Esophagus muscularis mucosa (tissue), 4 donors: ENCODE measurements at regions of chr1 and their contacts with region 1.

Region 1: DNA sequence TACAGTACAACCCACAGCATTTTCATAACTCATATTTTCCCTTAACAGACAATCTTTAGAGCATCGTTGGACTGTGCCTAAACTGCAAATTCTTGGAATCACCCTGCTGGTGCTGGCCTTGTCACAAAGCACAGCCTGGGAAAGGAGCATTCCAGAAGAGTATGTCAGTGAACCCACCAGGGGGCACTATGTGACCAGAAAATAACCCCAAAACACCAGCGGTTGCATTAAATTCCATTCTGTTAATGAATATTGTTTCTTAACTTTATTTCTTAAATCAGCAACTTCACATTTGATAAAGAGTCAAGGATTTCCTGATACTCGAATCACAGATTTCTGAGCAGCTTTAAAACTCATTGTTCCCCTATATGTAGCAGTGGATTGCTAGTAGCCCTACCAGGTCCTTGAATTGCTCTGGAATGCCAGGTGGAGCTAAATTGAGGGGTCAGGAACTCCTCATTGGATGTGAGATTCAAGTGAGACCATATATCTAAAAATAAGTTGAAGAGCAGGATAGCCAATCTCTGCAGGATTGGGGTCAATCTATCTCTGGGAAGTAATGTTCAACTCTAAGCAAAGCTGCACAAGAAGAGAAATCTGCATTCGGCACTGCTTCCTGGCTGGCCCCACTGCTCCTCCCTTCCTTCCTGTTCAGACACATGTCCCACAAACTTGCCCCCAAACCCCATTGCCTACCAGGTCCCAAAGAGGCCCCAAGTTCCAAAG is 12.7 kb upstream of the RAB4A start:
- DNase-seq: no peak
- H3K4me3 ChIP-seq: no peak overlapping the region
- H3K27ac ChIP-seq: no peak overlapping the region
- H3K4me1 ChIP-seq: peaks cover 7 to 15% (median 12%) of the 10 kb centered on the region in 4 donors
- H3K27me3 ChIP-seq: no peaks in the 10 kb centered on the region
- CTCF ChIP-seq: peak; percentile 78 to 91 (median 79)
- EP300 ChIP-seq: no peak
- POLR2A ChIP-seq: no peak

Region 2: GRCh38 chr1:229368347-229368746 is 110.2 kb after region 1 on chr1:
- intact Hi-C with region 1: no loop called
- DNase-seq: no peak
- H3K4me3 ChIP-seq: no peak overlapping the region
- H3K27ac ChIP-seq: no peak overlapping the region
- H3K4me1 ChIP-seq: no peaks in the 10 kb centered on the region
- H3K27me3 ChIP-seq: peaks cover 0 to 28% (median 0%) of the 10 kb centered on the region in 4 donors
- CTCF ChIP-seq: no peak
- EP300 ChIP-seq: no peak
- POLR2A ChIP-seq: no peak

Region 3: DNA sequence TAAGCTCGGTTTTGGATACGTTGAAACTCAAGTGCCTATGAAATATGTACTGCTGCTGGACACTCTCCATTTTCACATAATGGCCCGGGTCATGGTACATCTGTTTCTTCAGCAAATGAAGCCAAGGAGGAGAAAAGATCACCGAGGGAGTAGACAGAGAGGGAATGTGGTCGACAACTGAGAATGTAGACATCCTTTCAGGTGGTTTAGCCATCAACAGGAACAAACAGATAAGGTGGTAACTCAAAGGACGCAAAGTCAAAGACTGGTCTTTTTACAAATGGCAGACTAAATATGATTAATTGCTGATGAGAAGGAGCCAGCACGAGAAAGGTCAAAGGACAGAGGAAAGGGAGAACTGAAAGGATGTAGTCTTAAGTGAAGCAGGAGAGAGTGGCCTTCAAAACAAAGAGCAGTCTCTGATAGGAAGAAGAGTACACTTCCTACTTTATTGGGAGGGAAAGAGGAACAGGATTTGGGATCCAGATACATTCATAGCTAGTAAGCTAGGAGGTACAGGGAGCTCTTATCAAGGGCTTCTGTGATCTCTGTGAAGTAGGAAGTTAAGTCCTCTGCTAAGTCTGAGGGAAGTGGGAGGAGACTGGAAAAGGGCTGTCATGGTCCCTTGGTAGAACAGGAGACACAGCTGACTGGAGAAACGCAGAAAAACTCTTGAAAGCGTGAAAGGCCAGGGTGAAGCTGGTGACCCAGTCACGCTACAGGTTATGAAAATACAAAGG is 221.6 kb after region 1 on chr1:
- intact Hi-C with region 1: loop called (anchors 2 kb)
- DNase-seq: no peak
- H3K4me3 ChIP-seq: no peak overlapping the region
- H3K27ac ChIP-seq: no peak overlapping the region
- H3K4me1 ChIP-seq: peaks cover 0 to 16% (median 13%) of the 10 kb centered on the region in 4 donors
- H3K27me3 ChIP-seq: no peaks in the 10 kb centered on the region
- CTCF ChIP-seq: no peak
- EP300 ChIP-seq: no peak
- POLR2A ChIP-seq: no peak